CD4-positive, alpha-beta T cell (primary cell): ENCODE measurements at regions of chrX and their contacts with region 1.

Region 1: GRCh38 chrX:41180194-41180908 is 95.1 kb downstream of the USP9X start:
- DNase-seq: peak; percentile 4 to 73 (median 36)
- ATAC-seq: peak; percentile 81
- H3K4me3 ChIP-seq: no peak overlapping the region
- H3K4me3 Mint-ChIP-seq: no peak overlapping the region
- H3K27ac ChIP-seq: no peak overlapping the region
- H3K27ac Mint-ChIP-seq: peak overlapping the region; percentile 77
- H3K4me1 ChIP-seq: no peaks in the 10 kb centered on the region
- H3K4me1 Mint-ChIP-seq: peaks cover 51% of the 10 kb centered on the region
- H3K27me3 ChIP-seq: no peaks in the 10 kb centered on the region
- H3K27me3 Mint-ChIP-seq: no peaks in the 10 kb centered on the region
- CTCF ChIP-seq: peak; percentile 62

Region 2: DNA sequence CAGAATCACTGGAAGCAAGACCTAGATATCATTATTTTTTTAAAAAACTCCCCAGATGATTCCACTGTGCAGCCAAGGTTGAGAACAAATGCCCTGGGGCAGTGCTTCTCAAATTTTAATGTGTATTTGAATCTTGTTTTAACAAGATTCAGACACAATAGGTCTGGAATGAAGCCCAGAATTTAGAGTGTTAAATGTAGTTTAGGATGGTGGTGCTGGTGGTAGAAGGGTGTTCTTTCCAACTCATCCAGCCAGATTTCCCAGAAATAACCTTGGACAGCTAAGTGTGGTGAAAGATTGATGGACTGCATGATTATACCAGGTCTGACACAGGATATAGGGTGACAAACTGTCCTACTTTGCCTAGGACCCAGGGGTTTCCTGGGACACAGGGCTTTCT is 324.9 kb before region 1 on chrX:
- CTCF ChIA-PET with region 1: no interaction called
- POLR2A ChIA-PET with region 1: no interaction called
- intact Hi-C with region 1: no loop called
- DNase-seq: no peak
- ATAC-seq: no peak
- H3K4me3 ChIP-seq: no peak overlapping the region
- H3K4me3 Mint-ChIP-seq: no peak overlapping the region
- H3K27ac ChIP-seq: no peak overlapping the region
- H3K27ac Mint-ChIP-seq: no peak overlapping the region
- H3K4me1 ChIP-seq: no peaks in the 10 kb centered on the region
- H3K4me1 Mint-ChIP-seq: no peaks in the 10 kb centered on the region
- H3K27me3 ChIP-seq: no peaks in the 10 kb centered on the region
- H3K27me3 Mint-ChIP-seq: no peaks in the 10 kb centered on the region
- CTCF ChIP-seq: no peak

Region 3: GRCh38 chrX:41224606-41225005 is 44.3 kb after region 1 on chrX:
- CTCF ChIA-PET with region 1: no interaction called
- POLR2A ChIA-PET with region 1: no interaction called
- intact Hi-C with region 1: loop called in 1 of 2 experiments (anchors 5 kb)
- DNase-seq: no peak
- ATAC-seq: no peak
- H3K4me3 ChIP-seq: no peak overlapping the region
- H3K4me3 Mint-ChIP-seq: no peak overlapping the region
- H3K27ac ChIP-seq: no peak overlapping the region
- H3K27ac Mint-ChIP-seq: no peak overlapping the region
- H3K4me1 ChIP-seq: no peaks in the 10 kb centered on the region
- H3K4me1 Mint-ChIP-seq: no peaks in the 10 kb centered on the region
- H3K27me3 ChIP-seq: no peaks in the 10 kb centered on the region
- H3K27me3 Mint-ChIP-seq: no peaks in the 10 kb centered on the region
- CTCF ChIP-seq: no peak

Region 4: GRCh38 chrX:41313419-41313818 is 133.1 kb after region 1 on chrX:
- CTCF ChIA-PET with region 1: no interaction called
- POLR2A ChIA-PET with region 1: no interaction called
- intact Hi-C with region 1: no loop called
- DNase-seq: no peak
- ATAC-seq: no peak
- H3K4me3 ChIP-seq: no peak overlapping the region
- H3K4me3 Mint-ChIP-seq: no peak overlapping the region
- H3K27ac ChIP-seq: no peak overlapping the region
- H3K27ac Mint-ChIP-seq: no peak overlapping the region
- H3K4me1 ChIP-seq: no peaks in the 10 kb centered on the region
- H3K4me1 Mint-ChIP-seq: no peaks in the 10 kb centered on the region
- H3K27me3 ChIP-seq: no peaks in the 10 kb centered on the region
- H3K27me3 Mint-ChIP-seq: no peaks in the 10 kb centered on the region
- CTCF ChIP-seq: no peak